B cell (primary cell): ENCODE measurements at regions of chr9 and their contacts with region 1.

Region 1: DNA sequence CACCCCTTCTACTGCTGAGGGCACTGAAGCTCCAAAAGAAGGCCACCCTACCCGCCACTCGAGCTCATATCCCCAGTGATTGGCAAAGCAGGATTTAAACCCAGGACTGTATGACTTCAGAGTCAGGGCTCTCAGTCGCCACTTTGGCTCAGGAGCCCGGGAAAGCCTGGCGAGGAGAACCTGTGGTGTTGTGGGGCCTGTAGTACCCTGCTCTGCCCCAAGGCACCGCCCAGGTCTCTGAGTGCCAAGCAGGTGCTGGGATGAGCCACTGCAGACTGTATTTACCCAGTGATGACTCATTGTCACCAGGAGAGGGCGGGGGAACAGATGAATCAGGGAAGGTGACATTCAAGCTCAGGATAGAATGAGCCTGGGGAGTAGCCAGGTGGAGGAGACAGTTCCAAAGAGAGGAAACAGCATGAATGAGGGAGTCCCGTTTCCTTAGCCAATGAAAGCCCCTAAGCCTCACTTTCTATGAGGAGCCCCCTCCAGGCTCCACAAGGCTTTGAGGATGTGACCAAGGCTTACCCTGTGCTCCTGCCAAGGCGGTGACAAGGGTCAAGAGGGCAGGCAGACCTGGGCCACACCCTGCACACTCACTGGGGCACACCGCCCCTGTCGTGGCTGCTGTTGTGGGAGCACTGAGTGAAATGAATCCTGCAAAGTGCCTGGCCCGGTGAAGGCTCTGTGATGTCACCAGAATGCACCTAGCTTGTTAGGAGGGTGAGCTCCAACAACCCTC is 17.8 kb upstream of the DPM2 start:
- DNase-seq: peak; percentile 77
- ATAC-seq: peak; percentile 97
- H3K4me3 ChIP-seq: no peak overlapping the region
- H3K4me3 Mint-ChIP-seq: peak overlapping the region; percentile 16
- H3K27ac ChIP-seq: peak overlapping the region in 1 of 2 donors; percentile 46
- H3K27ac Mint-ChIP-seq: peak overlapping the region; percentile 80
- H3K4me1 ChIP-seq: peaks cover 8 to 30% of the 10 kb centered on the region in 2 donors
- H3K4me1 Mint-ChIP-seq: peaks cover 53% of the 10 kb centered on the region
- H3K27me3 ChIP-seq: no peaks in the 10 kb centered on the region
- H3K27me3 Mint-ChIP-seq: no peaks in the 10 kb centered on the region
- CTCF ChIP-seq: peak; percentile 63

Region 2: DNA sequence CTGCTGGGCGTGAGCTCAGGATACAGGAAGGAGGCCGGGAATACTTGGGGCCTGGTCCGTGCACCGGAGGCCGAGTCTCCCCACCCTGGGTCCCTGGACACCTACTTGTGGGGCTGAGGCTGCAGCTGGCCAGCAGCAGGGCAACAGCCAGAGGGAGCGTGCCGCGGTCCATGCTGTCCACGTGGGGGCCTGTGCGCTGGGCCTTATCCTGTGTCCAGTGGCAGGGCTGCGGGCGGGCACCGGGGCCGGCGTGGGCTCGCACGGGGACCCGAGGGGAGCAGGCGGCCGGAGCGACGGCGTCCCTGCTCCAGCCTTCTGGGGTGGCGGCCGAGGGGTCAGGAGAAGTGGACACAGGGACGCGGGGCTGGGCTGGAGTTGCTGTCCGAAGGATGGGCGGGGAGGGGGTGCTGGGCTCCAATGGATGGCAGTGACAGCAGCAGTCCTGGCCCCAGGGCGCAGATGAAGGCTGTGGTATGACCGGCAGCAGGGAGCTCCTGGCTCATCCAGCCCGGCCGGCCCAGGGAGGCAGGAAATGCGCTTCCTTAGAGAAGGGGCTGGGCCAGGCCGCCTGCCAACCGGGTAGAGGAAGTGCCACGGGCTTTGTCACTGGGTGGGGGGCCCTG is 101.2 kb before region 1 on chr9 and contains the start of gene ENG:
- CTCF ChIA-PET with region 1: no interaction called
- POLR2A ChIA-PET with region 1: no interaction called
- intact Hi-C with region 1: no loop called
- DNase-seq: peak; percentile 30
- ATAC-seq: peak; percentile 46
- H3K4me3 ChIP-seq: peak within 1 kb of the TSS; percentile 45 to 92 (median 64)
- H3K4me3 Mint-ChIP-seq: peak within 1 kb of the TSS; percentile 87
- H3K27ac ChIP-seq: peak within 1 kb of the TSS; percentile 24 to 74
- H3K27ac Mint-ChIP-seq: peak within 1 kb of the TSS; percentile 82
- H3K4me1 ChIP-seq: peaks cover 36 to 57% of the 10 kb centered on the region in 2 donors
- H3K4me1 Mint-ChIP-seq: peaks cover 42% of the 10 kb centered on the region
- H3K27me3 ChIP-seq: no peaks in the 10 kb centered on the region
- H3K27me3 Mint-ChIP-seq: no peaks in the 10 kb centered on the region
- CTCF ChIP-seq: no peak
- total RNA-seq, gene ENG: 12.6 and 14.0 TPM in 2 replicates

Region 3: GRCh38 chr9:127970401-127971313 is 15.2 kb after region 1 on chr9:
- CTCF ChIA-PET with region 1: interaction called, 182 read pairs
- POLR2A ChIA-PET with region 1: interaction called, 14 read pairs
- intact Hi-C with region 1: loop called (anchors 2 kb)
- DNase-seq: peak; percentile 87
- ATAC-seq: peak; percentile 69
- H3K4me3 ChIP-seq: peak overlapping the region in 3 of 5 experiments; percentile 5 to 18 (median 6)
- H3K4me3 Mint-ChIP-seq: peak overlapping the region; percentile 77
- H3K27ac ChIP-seq: peak overlapping the region; percentile 91 to 97
- H3K27ac Mint-ChIP-seq: peak overlapping the region; percentile 96
- H3K4me1 ChIP-seq: peaks cover 99 to 100% of the 10 kb centered on the region in 2 donors
- H3K4me1 Mint-ChIP-seq: peaks cover 98% of the 10 kb centered on the region
- H3K27me3 ChIP-seq: no peaks in the 10 kb centered on the region
- H3K27me3 Mint-ChIP-seq: no peaks in the 10 kb centered on the region
- CTCF ChIP-seq: no peak

Region 4: DNA sequence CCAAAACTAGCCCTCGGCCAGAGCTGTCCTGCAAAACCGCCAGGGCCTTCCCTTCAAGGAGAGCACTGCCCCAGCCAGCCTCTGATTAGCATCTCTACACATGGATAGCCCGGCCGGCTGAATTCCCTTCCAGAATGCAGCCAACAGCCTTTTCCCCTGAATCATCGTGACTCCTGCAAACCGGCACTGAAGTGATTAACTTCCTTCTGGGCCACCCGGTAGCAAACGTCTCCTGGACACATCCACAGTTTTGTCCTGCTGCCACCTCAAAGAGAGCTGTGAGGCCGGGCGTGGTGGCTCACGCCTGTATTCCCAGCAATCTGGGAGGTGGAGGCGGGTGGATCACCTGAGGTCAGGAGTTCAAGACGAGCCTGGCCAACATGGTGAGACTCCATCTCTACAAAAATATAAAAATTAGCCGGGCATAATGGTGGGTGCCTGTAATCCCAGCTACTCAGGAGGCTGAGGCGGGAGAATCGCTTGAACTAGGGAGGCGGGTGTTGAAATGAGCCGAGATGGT is 46.4 kb after region 1 on chr9:
- CTCF ChIA-PET with region 1: interaction called, 14 read pairs
- POLR2A ChIA-PET with region 1: no interaction called
- intact Hi-C with region 1: loop called (anchors 5 kb)
- DNase-seq: no peak
- ATAC-seq: no peak
- H3K4me3 ChIP-seq: no peak overlapping the region
- H3K4me3 Mint-ChIP-seq: no peak overlapping the region
- H3K27ac ChIP-seq: no peak overlapping the region
- H3K27ac Mint-ChIP-seq: no peak overlapping the region
- H3K4me1 ChIP-seq: peaks cover 33 to 39% of the 10 kb centered on the region in 2 donors
- H3K4me1 Mint-ChIP-seq: peaks cover 30% of the 10 kb centered on the region
- H3K27me3 ChIP-seq: no peaks in the 10 kb centered on the region
- H3K27me3 Mint-ChIP-seq: no peaks in the 10 kb centered on the region
- CTCF ChIP-seq: no peak

Region 5: GRCh38 chr9:128007566-128008138 is 52.2 kb after region 1 on chr9:
- CTCF ChIA-PET with region 1: interaction called, 14 read pairs
- POLR2A ChIA-PET with region 1: no interaction called
- intact Hi-C with region 1: no loop called
- DNase-seq: peak; percentile 92
- ATAC-seq: peak; percentile 80
- H3K4me3 ChIP-seq: peak overlapping the region in 3 of 5 experiments; percentile 0 to 35 (median 10)
- H3K4me3 Mint-ChIP-seq: peak overlapping the region; percentile 82
- H3K27ac ChIP-seq: peak overlapping the region; percentile 81 to 93
- H3K27ac Mint-ChIP-seq: peak overlapping the region; percentile 91
- H3K4me1 ChIP-seq: peaks cover 56 to 72% of the 10 kb centered on the region in 2 donors
- H3K4me1 Mint-ChIP-seq: peaks cover 60% of the 10 kb centered on the region
- H3K27me3 ChIP-seq: no peaks in the 10 kb centered on the region
- H3K27me3 Mint-ChIP-seq: no peaks in the 10 kb centered on the region
- CTCF ChIP-seq: no peak

Region 6: DNA sequence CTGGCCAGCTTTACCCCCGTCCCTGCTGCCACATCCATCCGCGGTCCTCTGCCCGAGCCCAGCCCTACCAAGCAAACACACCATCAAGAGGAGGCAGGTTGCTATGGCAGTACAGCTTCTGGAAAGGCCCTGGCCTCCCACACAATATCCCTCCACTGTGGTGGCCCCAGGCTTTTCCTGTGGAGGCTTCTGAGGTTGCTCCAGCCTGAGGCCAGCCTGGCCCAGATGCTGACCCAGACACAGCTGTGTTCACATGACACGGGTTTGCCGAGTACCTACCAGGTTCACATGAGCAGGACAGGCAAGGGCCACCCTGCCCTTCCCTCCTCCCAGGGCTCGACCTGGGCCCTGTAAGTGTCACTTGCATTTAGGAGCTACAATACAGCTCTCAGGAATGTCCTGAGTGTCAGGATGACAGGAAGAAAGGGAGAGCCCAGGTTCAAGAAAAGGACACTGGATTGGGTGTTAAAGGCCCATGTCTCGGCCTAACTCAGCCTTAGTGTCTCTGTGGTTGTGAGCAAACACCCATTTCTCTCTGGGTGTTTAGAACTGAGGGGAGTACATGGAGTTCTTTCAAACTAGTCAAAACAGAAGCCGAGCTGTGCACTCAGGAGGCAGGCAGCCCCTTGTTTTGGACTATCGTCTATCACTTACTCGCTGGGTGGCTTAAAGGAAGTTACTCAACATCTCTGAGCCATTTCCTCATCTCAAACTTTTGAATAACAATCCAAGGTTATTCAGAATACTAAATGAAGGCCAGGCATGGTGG is 71.5 kb after region 1 on chr9:
- CTCF ChIA-PET with region 1: interaction called, 251 read pairs
- POLR2A ChIA-PET with region 1: interaction called, 6 read pairs
- intact Hi-C with region 1: no loop called
- DNase-seq: no peak
- ATAC-seq: peak; percentile 4
- H3K4me3 ChIP-seq: peak overlapping the region in 1 of 5 experiments; percentile 22
- H3K4me3 Mint-ChIP-seq: peak overlapping the region; percentile 81
- H3K27ac ChIP-seq: peak overlapping the region; percentile 88 to 100
- H3K27ac Mint-ChIP-seq: peak overlapping the region; percentile 96
- H3K4me1 ChIP-seq: peaks cover 73 to 94% of the 10 kb centered on the region in 2 donors
- H3K4me1 Mint-ChIP-seq: peaks cover 78% of the 10 kb centered on the region
- H3K27me3 ChIP-seq: no peaks in the 10 kb centered on the region
- H3K27me3 Mint-ChIP-seq: no peaks in the 10 kb centered on the region
- CTCF ChIP-seq: no peak

Region 7: DNA sequence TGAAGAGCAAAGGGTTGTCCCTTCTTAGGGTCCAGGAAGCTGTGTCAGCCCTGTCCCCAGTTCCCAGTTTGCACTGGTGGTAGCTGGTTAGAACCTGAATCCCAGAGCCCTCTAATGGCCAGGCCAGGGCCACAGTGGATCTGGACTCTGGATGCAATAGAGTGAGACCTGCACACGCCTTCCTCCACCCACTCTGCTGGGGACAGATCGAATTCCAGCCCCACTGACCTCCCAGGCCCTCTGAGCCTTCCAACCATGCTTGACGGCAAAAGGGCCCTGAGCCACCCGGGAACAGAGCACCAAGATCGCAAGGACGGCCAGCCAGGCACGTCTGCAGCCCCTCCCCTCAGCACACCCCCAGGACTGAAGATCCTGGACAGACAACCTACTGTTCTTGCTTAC is 88.0 kb after region 1 on chr9:
- CTCF ChIA-PET with region 1: interaction called, 310 read pairs
- POLR2A ChIA-PET with region 1: no interaction called
- intact Hi-C with region 1: no loop called
- DNase-seq: no peak
- ATAC-seq: no peak
- H3K4me3 ChIP-seq: no peak overlapping the region
- H3K4me3 Mint-ChIP-seq: no peak overlapping the region
- H3K27ac ChIP-seq: no peak overlapping the region
- H3K27ac Mint-ChIP-seq: no peak overlapping the region
- H3K4me1 ChIP-seq: no peaks in the 10 kb centered on the region
- H3K4me1 Mint-ChIP-seq: no peaks in the 10 kb centered on the region
- H3K27me3 ChIP-seq: no peaks in the 10 kb centered on the region
- H3K27me3 Mint-ChIP-seq: peaks cover 3% of the 10 kb centered on the region
- CTCF ChIP-seq: no peak

Region 8: DNA sequence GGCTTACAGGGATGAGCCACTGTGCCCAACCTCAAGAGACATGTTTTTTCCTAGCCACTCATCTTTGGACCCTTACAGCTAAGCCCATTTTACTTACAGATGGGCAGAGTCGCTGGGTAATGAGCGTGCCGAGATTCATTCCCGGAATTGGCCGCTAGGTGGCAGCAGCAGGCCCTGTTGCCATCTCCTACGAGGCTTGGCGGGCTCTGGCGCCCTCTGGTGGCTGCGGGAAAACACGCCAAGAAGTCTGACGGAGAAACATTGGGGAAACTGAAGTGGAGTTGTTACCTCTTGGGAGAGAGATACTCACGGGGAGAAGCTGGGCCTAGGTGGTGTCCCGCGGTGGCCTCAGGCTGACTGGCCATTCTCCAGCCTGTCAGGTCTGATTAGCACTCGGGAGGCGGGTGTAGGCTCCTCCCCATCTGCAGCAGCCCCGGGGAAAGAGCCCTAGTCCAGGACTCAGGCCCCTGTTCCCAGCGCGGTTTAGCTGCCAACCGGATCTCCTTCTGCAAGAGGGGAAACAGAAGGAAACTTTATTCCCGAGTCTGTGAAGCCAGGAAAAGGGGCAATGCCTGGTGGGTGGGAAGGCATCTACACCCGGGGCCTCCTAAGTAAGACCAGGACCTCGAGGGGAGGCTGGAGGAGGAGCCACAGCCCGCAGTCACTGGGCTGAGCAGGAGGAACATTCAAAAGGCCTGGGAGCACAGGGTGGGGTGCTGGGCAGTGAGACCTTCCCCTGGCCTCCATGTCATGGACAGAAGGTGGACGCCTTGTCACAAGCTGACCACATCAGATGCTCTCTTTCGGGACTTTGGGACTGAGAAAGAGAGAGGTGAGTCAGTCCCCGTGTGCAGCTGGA is 162.4 kb after region 1 on chr9:
- CTCF ChIA-PET with region 1: interaction called, 18 read pairs
- POLR2A ChIA-PET with region 1: no interaction called
- intact Hi-C with region 1: loop called (anchors 5 kb)
- DNase-seq: peak; percentile 94
- ATAC-seq: peak; percentile 52
- H3K4me3 ChIP-seq: no peak overlapping the region
- H3K4me3 Mint-ChIP-seq: no peak overlapping the region
- H3K27ac ChIP-seq: no peak overlapping the region
- H3K27ac Mint-ChIP-seq: peak overlapping the region; percentile 78
- H3K4me1 ChIP-seq: peaks cover 37 to 42% of the 10 kb centered on the region in 2 donors
- H3K4me1 Mint-ChIP-seq: peaks cover 38% of the 10 kb centered on the region
- H3K27me3 ChIP-seq: no peaks in the 10 kb centered on the region
- H3K27me3 Mint-ChIP-seq: no peaks in the 10 kb centered on the region
- CTCF ChIP-seq: peak; percentile 100

Region 9: DNA sequence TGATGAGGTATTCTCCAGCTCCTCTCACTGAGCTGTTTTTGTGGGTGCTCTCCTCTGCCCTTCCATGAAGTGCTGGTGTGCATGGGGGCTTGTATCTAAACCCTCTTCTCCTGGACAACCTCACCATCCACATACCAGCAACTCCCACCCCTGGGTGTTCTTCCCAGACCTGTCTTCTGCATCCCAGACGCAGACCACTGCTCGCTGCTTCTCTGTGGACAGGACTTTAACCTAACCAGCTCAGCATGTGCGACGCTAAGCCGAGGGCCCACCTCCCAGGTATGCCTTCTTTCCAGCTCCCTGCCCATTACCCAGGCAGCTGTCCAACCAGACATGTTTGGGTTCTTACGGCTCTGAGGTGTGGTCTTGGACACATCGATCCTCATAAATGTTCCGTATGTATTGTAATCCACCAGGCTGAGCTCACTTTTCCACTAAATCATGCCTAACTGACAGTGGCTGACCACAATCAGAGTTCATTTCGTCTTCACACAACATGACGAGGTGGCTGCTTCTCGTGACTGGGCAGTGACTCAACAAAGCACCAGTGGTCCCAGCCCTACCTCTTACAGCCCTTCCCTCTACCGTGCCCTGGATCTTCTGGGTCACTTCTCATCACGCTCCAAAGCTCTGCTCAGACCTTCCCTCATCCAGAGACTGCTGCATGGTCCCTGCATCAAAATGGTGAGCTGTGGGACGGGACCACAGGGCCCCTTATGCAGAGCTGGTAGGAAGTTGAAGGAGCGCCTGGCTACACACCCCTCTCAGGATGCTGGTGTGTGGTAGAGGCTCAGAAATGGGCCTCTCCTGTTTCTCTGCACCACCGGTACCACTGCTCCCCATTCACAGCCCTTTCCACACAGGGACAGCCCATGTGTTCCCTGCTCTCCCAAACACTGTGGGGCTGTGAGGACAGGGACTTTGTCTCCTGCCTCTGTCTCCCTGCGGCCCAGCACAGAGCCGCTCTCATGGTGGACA is 181.6 kb after region 1 on chr9:
- CTCF ChIA-PET with region 1: no interaction called
- POLR2A ChIA-PET with region 1: no interaction called
- intact Hi-C with region 1: no loop called
- DNase-seq: no peak
- ATAC-seq: no peak
- H3K4me3 ChIP-seq: no peak overlapping the region
- H3K4me3 Mint-ChIP-seq: no peak overlapping the region
- H3K27ac ChIP-seq: no peak overlapping the region
- H3K27ac Mint-ChIP-seq: no peak overlapping the region
- H3K4me1 ChIP-seq: peaks cover 0 to 9% of the 10 kb centered on the region in 2 donors
- H3K4me1 Mint-ChIP-seq: no peaks in the 10 kb centered on the region
- H3K27me3 ChIP-seq: peaks cover 0 to 3% (median 0%) of the 10 kb centered on the region in 4 experiments
- H3K27me3 Mint-ChIP-seq: peaks cover 27% of the 10 kb centered on the region
- CTCF ChIP-seq: no peak